ENCODE measurements at regions of chr2 and their contacts with region 1.

Region 1: GRCh38 chr2:142682528-142682927 is 194.9 kb upstream of the KYNU start:
- DNase-seq: no peak
- H3K4me3 ChIP-seq: no peak overlapping the region
- H3K27ac ChIP-seq: no peak overlapping the region
- H3K27me3 ChIP-seq: no peaks in the 10 kb centered on the region
- CTCF ChIP-seq: peak; percentile 38

Region 2: DNA sequence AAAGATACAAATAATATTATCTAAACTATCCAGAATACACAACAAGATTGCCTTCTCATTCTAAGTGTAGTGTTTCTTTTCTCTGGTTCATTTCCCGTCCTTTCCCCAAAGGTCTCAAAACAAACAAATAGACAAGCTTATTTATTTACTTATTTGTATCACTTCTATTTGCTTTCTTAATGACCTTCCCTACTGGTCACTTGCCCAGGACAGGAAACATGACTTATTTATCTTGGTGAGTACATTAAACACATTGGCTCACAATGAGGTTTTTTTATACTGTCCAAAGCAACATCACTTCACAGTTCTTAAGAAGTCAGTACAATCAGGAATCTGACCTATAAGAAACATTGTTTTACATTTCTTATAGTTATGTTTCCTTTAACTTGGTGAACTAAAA is 71.7 kb after region 1 on chr2:
- CTCF ChIA-PET with region 1: no interaction called
- POLR2A ChIA-PET with region 1: no interaction called
- DNase-seq: no peak
- H3K4me3 ChIP-seq: no peak overlapping the region
- H3K27ac ChIP-seq: no peak overlapping the region
- H3K27me3 ChIP-seq: no peaks in the 10 kb centered on the region
- CTCF ChIP-seq: no peak

Region 3: DNA sequence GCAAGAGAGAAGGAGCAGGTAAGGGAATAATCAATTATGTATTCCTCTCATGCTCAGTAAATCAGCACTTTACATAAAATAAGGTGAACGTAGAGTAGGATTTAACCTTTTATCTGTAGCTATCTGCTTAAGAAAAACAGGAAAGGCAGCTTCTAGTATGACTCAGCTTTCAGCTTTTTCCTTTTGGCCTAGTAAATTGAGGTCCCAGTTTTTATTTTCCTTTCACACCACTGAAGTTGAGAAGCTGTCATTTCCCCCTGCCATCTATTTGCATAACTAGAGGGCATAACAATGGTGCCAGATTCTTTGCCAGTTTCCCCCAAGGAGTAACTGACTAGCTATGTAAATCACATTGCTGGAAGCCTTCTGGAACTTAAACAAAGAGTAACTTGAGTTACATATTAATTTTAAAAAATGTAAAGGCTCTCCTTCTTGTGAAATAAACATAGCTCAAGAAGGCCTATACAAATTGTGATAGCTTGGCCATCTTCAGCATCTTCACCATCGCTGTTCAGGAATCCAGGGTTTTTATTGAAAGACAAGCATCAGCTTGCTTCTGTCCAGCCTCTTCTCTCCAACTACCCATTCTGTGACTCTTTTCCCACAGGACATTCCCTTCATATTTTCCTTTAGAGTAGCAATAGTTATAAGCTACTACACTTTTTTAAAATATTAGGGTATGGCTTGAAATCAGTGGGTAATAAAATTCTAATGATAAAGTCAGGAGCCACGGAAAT is 291.9 kb after region 1 on chr2:
- CTCF ChIA-PET with region 1: interaction called, 94 read pairs
- POLR2A ChIA-PET with region 1: no interaction called
- DNase-seq: no peak
- H3K4me3 ChIP-seq: no peak overlapping the region
- H3K27ac ChIP-seq: peak overlapping the region; percentile 25
- H3K27me3 ChIP-seq: no peaks in the 10 kb centered on the region
- CTCF ChIP-seq: no peak

Region 4: DNA sequence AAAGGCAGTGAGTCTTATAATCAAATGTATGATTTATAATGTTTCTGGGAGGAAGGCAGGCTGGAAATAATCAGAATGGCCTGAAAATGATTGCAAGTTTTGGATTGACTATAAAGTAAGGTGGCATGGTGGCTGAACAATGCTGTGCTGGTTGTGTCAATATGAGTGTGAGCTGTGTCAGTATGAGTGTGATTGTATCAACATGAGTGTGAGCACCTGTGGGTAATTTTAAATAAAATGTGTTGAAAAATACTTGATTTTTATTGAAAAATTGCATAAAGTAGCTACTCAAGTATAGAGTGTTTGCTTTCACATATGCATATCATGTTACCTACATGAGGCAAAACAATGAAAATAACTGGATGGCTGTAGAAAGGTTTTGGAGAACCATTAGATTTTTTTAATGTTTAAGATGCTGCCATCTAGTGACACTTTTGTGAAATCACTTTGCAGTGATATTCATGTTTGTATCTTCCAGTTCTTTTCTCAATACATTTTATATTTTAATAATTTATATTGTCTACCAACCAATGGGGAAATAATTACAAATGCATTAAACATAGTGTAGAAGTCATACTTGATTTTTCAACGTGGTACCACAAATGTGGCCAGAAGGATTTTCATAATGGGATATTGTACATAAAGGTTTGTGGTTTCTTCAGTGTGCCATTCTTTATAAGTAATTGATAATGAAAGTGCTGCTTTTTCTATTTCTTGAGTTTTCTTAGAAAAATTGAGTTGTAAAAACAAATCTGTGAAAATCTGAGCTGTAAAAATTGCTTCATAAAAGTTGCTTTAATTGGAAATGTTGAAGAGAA is 298.2 kb after region 1 on chr2:
- CTCF ChIA-PET with region 1: interaction called, 94 read pairs
- POLR2A ChIA-PET with region 1: no interaction called
- DNase-seq: no peak
- H3K4me3 ChIP-seq: no peak overlapping the region
- H3K27ac ChIP-seq: no peak overlapping the region
- H3K27me3 ChIP-seq: no peaks in the 10 kb centered on the region
- CTCF ChIP-seq: peak; percentile 55

Region 5: DNA sequence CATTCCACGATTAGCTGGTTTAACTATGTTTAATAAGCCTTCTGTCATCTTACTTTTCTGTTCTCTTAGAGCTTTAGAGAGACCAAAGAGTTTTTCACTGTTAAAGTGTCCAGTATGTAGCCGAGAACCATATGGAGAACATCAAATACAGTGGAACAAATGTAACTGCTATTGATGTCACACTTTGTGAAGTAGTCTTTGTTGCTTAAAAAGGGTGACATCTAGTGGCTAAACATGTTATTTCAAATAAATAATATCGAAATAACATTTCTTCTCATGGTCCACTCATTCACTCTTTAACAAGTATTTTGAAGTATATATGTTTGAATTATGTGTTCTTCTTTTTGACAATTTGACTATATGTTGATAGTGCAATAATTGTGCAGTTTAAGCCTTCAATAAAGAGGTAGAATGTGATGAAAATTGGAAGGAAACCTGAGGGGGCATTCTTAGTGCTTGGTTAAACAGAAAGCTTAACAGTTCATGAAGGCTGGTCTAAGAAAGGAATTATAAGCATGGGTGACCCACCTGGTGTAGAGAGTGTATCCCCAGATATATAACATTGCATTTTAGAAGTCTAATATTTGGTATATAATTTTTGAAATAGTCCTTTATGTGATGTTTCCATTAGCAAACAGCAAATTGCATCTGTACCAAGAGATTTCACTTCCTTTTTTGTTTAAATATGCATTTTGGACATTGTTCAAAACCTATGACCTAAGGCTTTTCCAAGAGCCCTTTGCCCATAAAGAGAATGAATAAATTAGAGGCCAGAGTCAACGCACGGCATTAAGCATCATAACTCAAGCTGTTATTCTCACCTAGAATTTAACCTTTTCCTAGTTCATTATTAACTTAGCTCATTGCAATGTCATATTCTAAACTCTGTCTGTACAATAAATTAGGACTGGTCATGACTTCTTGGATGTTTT is 307.0 kb after region 1 on chr2:
- CTCF ChIA-PET with region 1: interaction called, 68 read pairs
- POLR2A ChIA-PET with region 1: no interaction called
- DNase-seq: no peak
- H3K4me3 ChIP-seq: no peak overlapping the region
- H3K27ac ChIP-seq: no peak overlapping the region
- H3K27me3 ChIP-seq: no peaks in the 10 kb centered on the region
- CTCF ChIP-seq: peak; percentile 55

Measured in AG04450 (cell line).